Lower leg skin (tissue), 4 donors: ENCODE measurements at regions of chr5 and their contacts with region 1.

Region 1: GRCh38 chr5:38922199-38922598 is 76.4 kb downstream of the OSMR start:
- DNase-seq: peak in 1 of 2 donors; percentile 40
- H3K4me3 ChIP-seq: no peak overlapping the region
- CTCF ChIP-seq: peak in 1 of 3 donors; percentile 78
- POLR2A ChIP-seq: no peak

Region 2: DNA sequence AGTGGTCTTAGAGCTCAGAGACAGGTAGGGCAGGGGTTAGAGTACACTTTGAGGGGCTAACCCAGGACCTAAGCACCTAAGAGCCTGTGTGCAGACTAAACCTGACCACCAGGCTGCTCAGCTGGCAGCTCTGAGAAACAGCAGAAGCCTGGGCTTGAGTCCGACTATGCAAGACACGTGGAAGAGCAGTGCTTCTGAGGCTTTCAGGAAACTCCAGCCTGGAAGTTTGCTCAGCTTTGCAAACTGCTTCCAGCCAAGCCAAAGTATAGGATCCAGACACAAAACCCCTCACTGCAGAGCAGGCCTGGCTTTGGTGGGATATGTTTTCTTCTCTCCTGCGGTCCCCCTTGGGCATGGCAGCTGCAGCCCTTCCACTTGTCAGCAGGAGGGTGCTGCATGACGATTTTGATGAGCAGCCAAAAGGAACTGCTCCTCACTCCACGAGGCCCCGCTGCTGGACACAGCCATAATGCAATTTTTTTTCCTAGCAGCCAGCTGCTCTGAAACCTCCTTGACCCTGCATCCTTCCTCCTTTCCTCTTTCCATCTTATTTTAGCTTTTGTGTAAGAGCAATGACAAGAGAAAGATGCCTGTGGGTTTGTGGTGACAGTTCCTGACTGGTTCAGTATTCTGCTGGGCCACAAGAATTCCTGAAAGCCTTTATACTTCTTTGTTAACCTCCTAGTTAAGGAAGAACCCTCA is 488.9 kb before region 1 on chr5:
- intact Hi-C with region 1: loop called (anchors 10 kb)
- DNase-seq: peak in 1 of 2 donors; percentile 77
- H3K4me3 ChIP-seq: no peak overlapping the region
- CTCF ChIP-seq: no peak
- POLR2A ChIP-seq: no peak

Region 3: GRCh38 chr5:38892363-38892762 is 29.8 kb before region 1 on chr5:
- intact Hi-C with region 1: no loop called
- DNase-seq: no peak
- H3K4me3 ChIP-seq: no peak overlapping the region
- CTCF ChIP-seq: no peak
- POLR2A ChIP-seq: no peak